Astrocyte of the cerebellum (primary cell): ENCODE measurements at regions of chr21 and their contacts with region 1.

Region 1: DNA sequence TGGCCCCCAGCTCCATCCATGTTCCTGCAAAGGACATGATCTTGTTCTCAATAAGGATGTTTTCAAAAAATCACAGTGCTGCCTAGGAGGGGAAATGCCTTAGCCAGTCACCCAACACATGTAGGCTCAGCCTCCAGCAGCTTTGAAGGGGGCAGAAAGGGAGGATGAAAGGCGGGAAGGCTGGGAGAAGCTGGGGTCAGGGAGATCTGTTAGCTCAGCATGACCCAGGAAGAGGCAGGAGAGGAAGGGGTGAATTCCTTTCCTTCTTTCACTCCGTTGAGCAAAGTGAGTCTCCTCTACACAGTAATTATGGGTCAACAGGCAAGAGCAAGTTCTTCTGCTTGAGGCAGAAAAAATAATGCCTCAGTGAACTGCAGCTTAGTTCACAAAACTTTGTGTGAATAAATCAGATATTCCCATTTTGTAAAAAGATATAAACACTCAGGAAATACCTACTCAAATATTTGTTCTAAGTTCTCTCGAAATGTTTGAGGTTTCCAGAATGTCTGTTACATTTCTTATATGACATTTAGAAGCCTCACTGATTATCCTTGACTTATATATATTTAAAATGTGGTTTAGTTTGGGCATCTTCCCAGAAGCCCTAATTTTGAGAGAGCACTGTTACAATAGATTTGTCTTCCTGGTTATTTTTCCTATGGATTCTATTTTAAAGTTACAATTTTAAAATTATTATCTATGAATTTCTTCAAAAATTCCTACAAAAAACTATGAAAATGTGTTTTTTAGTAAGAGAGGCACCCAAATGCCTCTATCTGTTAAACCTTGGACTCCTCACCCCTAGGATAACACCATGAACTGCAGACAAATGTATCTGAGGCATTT is 116.8 kb downstream of the KCNJ6 start:
- DNase-seq: no peak
- H3K4me3 ChIP-seq: no peak overlapping the region
- CTCF ChIP-seq: no peak

Region 2: GRCh38 chr21:37711836-37712568 is 87.4 kb before region 1 on chr21:
- in situ Hi-C with region 1: no loop called
- DNase-seq: peak; percentile 49
- H3K4me3 ChIP-seq: no peak overlapping the region
- CTCF ChIP-seq: peak; percentile 98

Region 3: GRCh38 chr21:37734846-37735245 is 64.6 kb before region 1 on chr21:
- in situ Hi-C with region 1: no loop called
- DNase-seq: no peak
- H3K4me3 ChIP-seq: no peak overlapping the region
- CTCF ChIP-seq: no peak

Region 4: GRCh38 chr21:37849506-37850102 is 50.2 kb after region 1 on chr21:
- in situ Hi-C with region 1: loop called (anchors 5 kb)
- DNase-seq: peak; percentile 50
- H3K4me3 ChIP-seq: no peak overlapping the region
- CTCF ChIP-seq: no peak